Lower leg skin (tissue), 4 donors: ENCODE measurements at regions of chr20 and their contacts with region 1.

Region 1: GRCh38 chr20:8464368-8464767 is 332.3 kb downstream of the PLCB1 start:
- DNase-seq: no peak
- H3K4me3 ChIP-seq: no peak overlapping the region
- CTCF ChIP-seq: no peak
- POLR2A ChIP-seq: no peak

Region 2: GRCh38 chr20:7031222-7031621 is 1433.1 kb before region 1 on chr20:
- intact Hi-C with region 1: loop called (anchors 5 kb)
- DNase-seq: no peak
- H3K4me3 ChIP-seq: no peak overlapping the region
- CTCF ChIP-seq: no peak
- POLR2A ChIP-seq: no peak

Region 3: GRCh38 chr20:8161264-8162071 is 302.9 kb before region 1 on chr20:
- intact Hi-C with region 1: no loop called
- DNase-seq: no peak
- H3K4me3 ChIP-seq: no peak overlapping the region
- CTCF ChIP-seq: no peak
- POLR2A ChIP-seq: no peak